ENCODE measurements at regions of chr20 and their contacts with region 1.

Region 1: GRCh38 chr20:36199345-36200257 is 36.7 kb upstream of the AAR2 start:
- DNase-seq: peak; percentile 90
- ATAC-seq: peak; percentile 91
- H3K4me3 Mint-ChIP-seq: no peak overlapping the region
- H3K27ac Mint-ChIP-seq: no peak overlapping the region
- H3K4me1 Mint-ChIP-seq: no peaks in the 10 kb centered on the region
- H3K27me3 Mint-ChIP-seq: no peaks in the 10 kb centered on the region
- CTCF ChIP-seq: peak; percentile 96

Region 2: DNA sequence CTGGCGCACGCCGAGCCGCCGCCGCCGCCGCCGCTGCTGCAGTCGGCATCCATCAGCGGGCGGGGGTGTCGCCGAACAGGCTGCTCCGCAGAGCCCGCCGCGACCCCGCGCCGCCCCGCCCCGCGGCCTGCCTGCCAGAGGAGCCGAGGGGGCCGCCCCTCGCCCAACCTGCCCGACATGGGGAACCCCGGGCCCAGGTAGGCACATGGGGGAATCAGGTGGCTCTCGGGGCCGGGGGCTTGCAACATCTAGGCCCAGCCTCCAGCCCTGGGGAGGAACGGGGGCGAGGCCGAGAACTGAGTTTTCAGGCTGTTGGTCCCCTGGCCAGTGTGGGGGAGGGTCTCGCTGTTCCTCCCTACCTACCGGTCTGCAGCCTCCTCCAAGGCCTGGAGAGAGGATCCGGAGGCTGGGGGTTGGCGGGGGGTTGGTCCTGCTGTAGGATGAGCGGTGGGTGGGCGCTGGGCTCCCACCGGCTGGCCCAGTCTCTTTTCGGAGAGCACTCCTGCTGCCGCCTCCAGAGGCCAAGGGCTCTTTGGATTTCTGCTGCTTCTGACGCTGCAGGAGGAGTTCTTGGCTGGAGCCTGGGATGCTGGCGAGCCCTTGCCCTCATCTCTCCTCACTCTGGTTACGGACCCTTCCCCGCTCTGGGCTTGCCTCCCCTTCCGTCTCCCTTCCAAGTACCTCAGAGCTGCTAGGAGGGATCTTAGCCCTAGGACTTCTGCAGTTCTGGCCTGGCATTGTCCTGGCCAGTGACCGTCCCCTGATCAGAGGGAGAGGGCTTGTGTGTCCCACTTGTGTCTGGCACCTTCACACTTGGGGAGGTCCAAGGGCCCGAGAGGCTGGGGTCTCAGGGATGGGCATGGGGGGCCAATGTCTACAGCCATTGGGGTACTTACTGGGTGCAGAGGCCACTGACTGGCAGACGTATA is 44.6 kb before region 1 on chr20 and contains the start of gene EPB41L1:
- CTCF ChIA-PET with region 1: interaction called, 24 read pairs
- POLR2A ChIA-PET with region 1: interaction called, 4 read pairs
- intact Hi-C with region 1: loop called (anchors 1 kb)
- DNase-seq: peak; percentile 17
- ATAC-seq: no peak
- H3K4me3 Mint-ChIP-seq: peak within 1 kb of the TSS; percentile 45
- H3K27ac Mint-ChIP-seq: no peak within 1 kb of the TSS
- H3K4me1 Mint-ChIP-seq: peaks cover 5% of the 10 kb centered on the region
- H3K27me3 Mint-ChIP-seq: peaks cover 16% of the 10 kb centered on the region
- CTCF ChIP-seq: no peak
- total RNA-seq, gene EPB41L1: 1.0 to 2.2 TPM

Region 3: GRCh38 chr20:36183155-36183944 is 16.3 kb before region 1 on chr20:
- CTCF ChIA-PET with region 1: interaction called, 21 read pairs
- POLR2A ChIA-PET with region 1: no interaction called
- intact Hi-C with region 1: no loop called
- DNase-seq: no peak
- ATAC-seq: no peak
- H3K4me3 Mint-ChIP-seq: no peak overlapping the region
- H3K27ac Mint-ChIP-seq: no peak overlapping the region
- H3K4me1 Mint-ChIP-seq: no peaks in the 10 kb centered on the region
- H3K27me3 Mint-ChIP-seq: no peaks in the 10 kb centered on the region
- CTCF ChIP-seq: no peak

Region 4: DNA sequence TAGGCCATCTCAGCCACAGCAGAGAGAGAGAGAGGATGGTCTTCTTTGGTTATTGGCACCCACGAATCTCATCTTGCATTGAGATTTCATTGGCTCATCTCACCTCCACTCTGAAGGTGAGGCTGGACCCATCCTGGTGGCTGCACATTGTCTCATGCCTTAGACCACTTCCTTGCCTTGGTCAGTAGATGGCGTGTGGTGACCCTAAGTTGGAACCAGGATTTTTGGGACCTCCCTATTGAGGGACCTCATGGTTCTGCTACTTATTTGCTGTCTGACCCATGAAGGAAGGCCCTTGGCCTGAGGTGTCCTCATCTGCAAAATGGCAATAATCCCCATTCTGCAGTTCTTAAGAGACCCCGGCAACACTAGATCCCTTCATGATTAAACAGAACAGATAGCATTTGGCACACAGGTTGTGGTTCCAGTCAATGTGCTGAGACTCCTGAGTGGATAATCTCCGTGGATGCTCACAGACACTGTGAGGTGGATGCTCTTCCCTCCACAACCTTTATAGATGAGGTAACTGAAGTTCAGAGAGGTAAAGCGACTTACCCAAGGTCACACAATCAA is 15.2 kb after region 1 on chr20:
- CTCF ChIA-PET with region 1: interaction called, 18 read pairs
- POLR2A ChIA-PET with region 1: no interaction called
- intact Hi-C with region 1: no loop called
- DNase-seq: peak; percentile 22
- ATAC-seq: peak; percentile 71
- H3K4me3 Mint-ChIP-seq: no peak overlapping the region
- H3K27ac Mint-ChIP-seq: no peak overlapping the region
- H3K4me1 Mint-ChIP-seq: no peaks in the 10 kb centered on the region
- H3K27me3 Mint-ChIP-seq: no peaks in the 10 kb centered on the region
- CTCF ChIP-seq: peak; percentile 62

Region 5: DNA sequence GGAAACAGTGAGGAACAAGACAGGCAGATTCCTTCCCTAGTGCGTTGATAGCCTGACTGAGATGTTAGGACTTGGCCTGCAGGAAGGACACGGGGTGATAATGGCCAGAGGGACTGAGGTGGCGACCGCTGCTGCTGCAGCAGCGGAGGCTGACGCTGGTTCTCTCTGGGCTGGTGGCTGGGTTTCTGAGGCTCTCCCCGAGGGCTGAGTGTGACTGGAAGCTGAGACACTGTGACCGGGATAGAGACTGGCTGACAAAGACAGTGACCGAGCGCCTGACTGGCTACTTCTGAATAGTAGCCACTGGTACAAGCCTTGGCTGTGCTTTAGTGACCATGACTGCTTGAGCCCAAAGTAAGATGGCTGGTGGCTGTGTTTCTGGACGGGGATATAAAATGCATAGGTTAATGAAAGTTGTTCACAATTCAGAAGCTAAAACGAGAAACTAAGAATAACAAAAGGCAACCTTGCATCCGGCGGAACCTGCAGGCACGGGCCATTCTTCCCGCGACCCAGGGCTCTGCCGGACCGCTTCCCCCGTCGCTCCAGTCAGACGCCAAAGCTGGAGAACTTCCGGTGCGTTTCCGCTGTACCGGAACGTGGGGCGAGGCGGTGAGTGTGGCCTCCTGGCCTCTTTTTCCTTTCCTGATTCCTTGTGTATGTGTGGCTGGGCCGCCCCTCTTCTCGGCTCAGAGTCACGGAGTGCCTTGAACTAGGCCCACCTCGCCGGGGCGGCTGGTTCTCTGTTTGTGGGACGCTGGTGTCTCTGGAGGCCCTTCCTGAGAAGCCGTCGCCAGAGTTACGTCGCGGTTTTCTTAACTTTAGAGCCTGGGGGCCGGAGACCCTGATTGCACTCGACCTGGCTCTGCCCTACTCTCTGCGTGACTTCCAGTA is 36.5 kb after region 1 on chr20 and contains the start of gene AAR2:
- CTCF ChIA-PET with region 1: interaction called, 10 read pairs
- POLR2A ChIA-PET with region 1: no interaction called
- intact Hi-C with region 1: no loop called
- DNase-seq: peak; percentile 86
- ATAC-seq: peak; percentile 99
- H3K4me3 Mint-ChIP-seq: peak within 1 kb of the TSS; percentile 74
- H3K27ac Mint-ChIP-seq: peak within 1 kb of the TSS; percentile 92
- H3K4me1 Mint-ChIP-seq: peaks cover 41% of the 10 kb centered on the region
- H3K27me3 Mint-ChIP-seq: no peaks in the 10 kb centered on the region
- CTCF ChIP-seq: no peak
- total RNA-seq, gene AAR2: 18.8 to 19.7 TPM

Region 6: GRCh38 chr20:36399147-36399968 is 199.8 kb after region 1 on chr20:
- CTCF ChIA-PET with region 1: interaction called, 22 read pairs
- POLR2A ChIA-PET with region 1: no interaction called
- intact Hi-C with region 1: no loop called
- DNase-seq: peak; percentile 80
- ATAC-seq: peak; percentile 77
- H3K4me3 Mint-ChIP-seq: no peak overlapping the region
- H3K27ac Mint-ChIP-seq: no peak overlapping the region
- H3K4me1 Mint-ChIP-seq: no peaks in the 10 kb centered on the region
- H3K27me3 Mint-ChIP-seq: peaks cover 20% of the 10 kb centered on the region
- CTCF ChIP-seq: peak; percentile 61

Region 7: GRCh38 chr20:36421641-36422040 is 222.0 kb after region 1 on chr20:
- CTCF ChIA-PET with region 1: no interaction called
- POLR2A ChIA-PET with region 1: no interaction called
- intact Hi-C with region 1: no loop called
- DNase-seq: no peak
- ATAC-seq: no peak
- H3K4me3 Mint-ChIP-seq: no peak overlapping the region
- H3K27ac Mint-ChIP-seq: no peak overlapping the region
- H3K4me1 Mint-ChIP-seq: no peaks in the 10 kb centered on the region
- H3K27me3 Mint-ChIP-seq: peaks cover 4% of the 10 kb centered on the region
- CTCF ChIP-seq: no peak

Region 8: DNA sequence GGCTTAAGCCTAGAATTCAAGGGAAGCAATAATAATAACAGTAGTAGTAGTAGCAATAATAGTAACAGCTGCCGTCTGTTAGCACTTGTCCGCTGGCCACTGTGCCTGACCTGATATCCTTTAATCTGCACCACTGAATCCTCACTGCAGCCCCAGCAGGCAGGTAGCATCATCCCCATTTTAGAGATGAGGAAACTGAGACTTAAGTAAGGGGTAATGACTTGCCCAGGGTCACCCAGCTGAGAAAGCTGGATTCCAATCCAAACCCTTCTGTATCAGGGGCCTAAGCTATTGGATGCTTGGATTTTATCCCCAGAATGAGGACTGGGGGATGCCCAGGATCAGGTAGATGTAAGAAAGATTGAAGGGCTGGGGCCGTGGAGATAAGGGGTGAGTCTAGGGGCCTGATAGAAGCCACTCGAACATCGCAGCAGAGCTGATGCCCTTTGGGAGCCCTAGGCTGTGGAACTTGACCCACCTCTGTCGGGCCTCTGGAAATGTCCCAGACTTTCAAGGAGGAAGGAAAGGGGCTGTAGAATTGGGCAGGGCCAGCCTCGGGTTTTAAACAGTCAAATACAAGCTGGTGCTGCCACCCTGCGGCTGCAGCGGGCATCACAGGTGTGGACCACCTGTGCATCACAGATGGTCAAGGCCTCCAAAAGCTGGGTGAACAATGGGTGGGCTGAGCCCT is 239.6 kb after region 1 on chr20:
- CTCF ChIA-PET with region 1: interaction called, 62 read pairs
- POLR2A ChIA-PET with region 1: no interaction called
- intact Hi-C with region 1: loop called (anchors 5 kb)
- DNase-seq: peak; percentile 84
- ATAC-seq: peak; percentile 70
- H3K4me3 Mint-ChIP-seq: no peak overlapping the region
- H3K27ac Mint-ChIP-seq: no peak overlapping the region
- H3K4me1 Mint-ChIP-seq: peaks cover 3% of the 10 kb centered on the region
- H3K27me3 Mint-ChIP-seq: peaks cover 6% of the 10 kb centered on the region
- CTCF ChIP-seq: peak; percentile 83

Measured in activated CD8-positive, alpha-beta T cell treated with anti-CD3 and anti-CD28 coated beads for 36 hours (primary cell).